CD4-positive, alpha-beta memory T cell (primary cell): ENCODE measurements at regions of chr4 and their contacts with region 1.

Region 1: DNA sequence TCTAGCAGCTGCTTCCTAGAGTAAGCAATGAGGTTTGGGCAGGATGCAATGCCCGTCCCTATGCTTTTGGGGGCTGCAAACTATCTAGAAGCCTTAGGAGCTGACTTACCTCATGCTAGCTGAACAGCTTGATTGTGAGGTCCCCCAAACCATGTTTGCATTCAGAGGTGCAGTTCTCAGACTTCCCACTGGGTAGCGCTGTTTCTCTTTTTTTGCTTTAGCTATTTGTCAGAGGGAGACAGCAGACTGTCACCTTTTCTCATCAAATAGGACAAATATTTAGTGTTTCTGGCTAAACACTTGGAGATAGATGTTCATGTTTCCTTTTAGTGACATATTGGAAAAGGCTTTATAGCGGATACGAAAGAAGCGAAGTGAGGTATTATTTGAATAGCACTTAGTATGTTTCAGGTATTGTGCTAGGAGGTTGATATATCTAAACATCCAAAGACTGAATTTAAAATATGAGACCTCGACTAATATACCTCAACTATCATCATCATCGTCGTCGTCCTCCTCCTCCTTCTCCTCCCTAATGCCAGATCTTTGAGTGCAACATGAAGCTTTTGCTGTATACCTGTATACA is 18.7 kb upstream of the TMEM192 start:
- DNase-seq: peak; percentile 62 to 77 (median 68)
- H3K4me3 ChIP-seq: no peak overlapping the region
- H3K4me3 Mint-ChIP-seq: no peak overlapping the region
- H3K27ac ChIP-seq: no peak overlapping the region
- H3K27ac Mint-ChIP-seq: peak overlapping the region in 1 of 7 donors; percentile 1
- H3K4me1 ChIP-seq: no peaks in the 10 kb centered on the region
- H3K4me1 Mint-ChIP-seq: peaks cover 0 to 2% (median 0%) of the 10 kb centered on the region in 4 donors
- H3K27me3 ChIP-seq: no peaks in the 10 kb centered on the region
- H3K27me3 Mint-ChIP-seq: peaks cover 23 to 24% of the 10 kb centered on the region in 2 donors

Region 2: GRCh38 chr4:164783976-164784375 is 347.4 kb before region 1 on chr4:
- CTCF ChIA-PET with region 1: no interaction called
- POLR2A ChIA-PET with region 1: no interaction called
- intact Hi-C with region 1: no loop called
- DNase-seq: no peak
- H3K4me3 ChIP-seq: no peak overlapping the region
- H3K4me3 Mint-ChIP-seq: no peak overlapping the region
- H3K27ac ChIP-seq: no peak overlapping the region
- H3K27ac Mint-ChIP-seq: no peak overlapping the region
- H3K4me1 ChIP-seq: no peaks in the 10 kb centered on the region
- H3K4me1 Mint-ChIP-seq: no peaks in the 10 kb centered on the region
- H3K27me3 ChIP-seq: no peaks in the 10 kb centered on the region
- H3K27me3 Mint-ChIP-seq: peaks cover 0 to 1% of the 10 kb centered on the region in 2 donors

Region 3: GRCh38 chr4:165118256-165118909 is 13.0 kb before region 1 on chr4:
- CTCF ChIA-PET with region 1: interaction called, 29 read pairs
- POLR2A ChIA-PET with region 1: no interaction called
- intact Hi-C with region 1: no loop called
- DNase-seq: no peak
- H3K4me3 ChIP-seq: no peak overlapping the region
- H3K4me3 Mint-ChIP-seq: no peak overlapping the region
- H3K27ac ChIP-seq: no peak overlapping the region
- H3K27ac Mint-ChIP-seq: no peak overlapping the region
- H3K4me1 ChIP-seq: peaks cover 4% of the 10 kb centered on the region
- H3K4me1 Mint-ChIP-seq: peaks cover 0 to 5% (median under 1%) of the 10 kb centered on the region in 4 donors
- H3K27me3 ChIP-seq: no peaks in the 10 kb centered on the region
- H3K27me3 Mint-ChIP-seq: peaks cover 6 to 8% of the 10 kb centered on the region in 2 donors

Region 4: DNA sequence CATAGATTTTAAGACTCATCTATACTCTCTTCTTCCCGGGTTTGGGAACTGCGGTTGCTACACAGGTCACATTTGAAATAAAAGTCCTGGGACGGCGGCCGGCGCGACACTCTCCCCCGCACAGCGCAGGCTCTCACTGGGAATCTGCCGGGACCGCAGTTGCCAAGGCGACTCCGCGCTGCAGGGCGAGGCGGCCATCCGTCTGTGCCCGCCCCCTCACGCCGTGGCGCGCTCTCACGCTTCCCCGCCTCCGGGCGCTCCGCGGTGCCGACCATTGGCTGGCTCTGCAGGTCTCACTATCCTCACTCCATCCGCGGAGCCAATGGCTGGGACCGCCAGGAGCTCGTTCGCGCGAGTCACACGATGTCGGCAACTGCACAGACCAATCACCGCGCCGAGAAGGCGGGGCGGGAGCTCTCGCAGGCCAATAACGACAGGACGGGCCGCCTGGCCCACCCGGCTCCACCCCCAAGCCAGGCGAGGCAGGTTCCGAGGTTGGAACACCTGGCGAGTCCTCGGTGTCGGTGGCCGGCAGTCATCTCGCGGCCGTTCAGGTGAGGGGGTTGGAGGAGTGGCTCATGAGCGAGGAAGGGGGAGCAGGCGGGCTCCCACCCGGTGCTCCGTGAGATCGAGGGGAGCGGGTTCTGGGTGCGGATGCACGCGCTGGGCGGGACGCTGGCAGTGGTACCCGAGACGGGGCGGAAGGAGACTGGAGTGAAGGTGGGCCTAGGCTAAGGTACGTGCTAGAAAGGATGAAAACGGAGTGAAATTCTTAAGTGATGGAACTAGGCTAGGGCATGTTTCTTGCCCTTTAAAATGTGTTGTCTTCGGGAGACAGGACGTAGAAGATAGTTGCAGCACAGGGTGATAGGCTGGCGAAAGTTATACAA is 196.1 kb after region 1 on chr4 and contains the start of gene MSMO1:
- CTCF ChIA-PET with region 1: interaction called, 6 read pairs
- POLR2A ChIA-PET with region 1: no interaction called
- intact Hi-C with region 1: loop called (anchors 5 kb)
- DNase-seq: peak; percentile 97 to 99 (median 98)
- H3K4me3 ChIP-seq: peak within 1 kb of the TSS; percentile 74 to 96
- H3K4me3 Mint-ChIP-seq: no peak within 1 kb of the TSS
- H3K27ac ChIP-seq: peak within 1 kb of the TSS; percentile 74
- H3K27ac Mint-ChIP-seq: no peak within 1 kb of the TSS
- H3K4me1 ChIP-seq: peaks cover 51% of the 10 kb centered on the region
- H3K4me1 Mint-ChIP-seq: peaks cover 21 to 38% (median 28%) of the 10 kb centered on the region in 4 donors
- H3K27me3 ChIP-seq: no peaks in the 10 kb centered on the region
- H3K27me3 Mint-ChIP-seq: no peaks in the 10 kb centered on the region
- total RNA-seq, gene MSMO1: 24.4 to 24.8 TPM

Region 5: GRCh38 chr4:165343353-165344191 is 212.2 kb after region 1 on chr4:
- CTCF ChIA-PET with region 1: interaction called, 66 read pairs
- POLR2A ChIA-PET with region 1: interaction called, 3 read pairs
- intact Hi-C with region 1: loop called (anchors 1 kb)
- DNase-seq: peak in 1 of 5 donors; percentile 3
- H3K4me3 ChIP-seq: no peak overlapping the region
- H3K4me3 Mint-ChIP-seq: no peak overlapping the region
- H3K27ac ChIP-seq: no peak overlapping the region
- H3K27ac Mint-ChIP-seq: no peak overlapping the region
- H3K4me1 ChIP-seq: no peaks in the 10 kb centered on the region
- H3K4me1 Mint-ChIP-seq: no peaks in the 10 kb centered on the region
- H3K27me3 ChIP-seq: no peaks in the 10 kb centered on the region
- H3K27me3 Mint-ChIP-seq: no peaks in the 10 kb centered on the region

Region 6: GRCh38 chr4:165394275-165394674 is 262.9 kb after region 1 on chr4:
- CTCF ChIA-PET with region 1: no interaction called
- POLR2A ChIA-PET with region 1: no interaction called
- intact Hi-C with region 1: no loop called
- DNase-seq: no peak
- H3K4me3 ChIP-seq: no peak overlapping the region
- H3K4me3 Mint-ChIP-seq: no peak overlapping the region
- H3K27ac ChIP-seq: no peak overlapping the region
- H3K27ac Mint-ChIP-seq: no peak overlapping the region
- H3K4me1 ChIP-seq: no peaks in the 10 kb centered on the region
- H3K4me1 Mint-ChIP-seq: no peaks in the 10 kb centered on the region
- H3K27me3 ChIP-seq: no peaks in the 10 kb centered on the region
- H3K27me3 Mint-ChIP-seq: peaks cover 4 to 10% of the 10 kb centered on the region in 2 donors

Region 7: GRCh38 chr4:165464813-165465381 is 333.6 kb after region 1 on chr4:
- CTCF ChIA-PET with region 1: interaction called, 90 read pairs
- POLR2A ChIA-PET with region 1: no interaction called
- intact Hi-C with region 1: loop called (anchors 1 kb)
- DNase-seq: peak in 4 of 5 donors; percentile 37 to 43 (median 38)
- H3K4me3 ChIP-seq: no peak overlapping the region
- H3K4me3 Mint-ChIP-seq: no peak overlapping the region
- H3K27ac ChIP-seq: no peak overlapping the region
- H3K27ac Mint-ChIP-seq: no peak overlapping the region
- H3K4me1 ChIP-seq: no peaks in the 10 kb centered on the region
- H3K4me1 Mint-ChIP-seq: no peaks in the 10 kb centered on the region
- H3K27me3 ChIP-seq: no peaks in the 10 kb centered on the region
- H3K27me3 Mint-ChIP-seq: peaks cover 0 to 2% of the 10 kb centered on the region in 2 donors

Region 8: DNA sequence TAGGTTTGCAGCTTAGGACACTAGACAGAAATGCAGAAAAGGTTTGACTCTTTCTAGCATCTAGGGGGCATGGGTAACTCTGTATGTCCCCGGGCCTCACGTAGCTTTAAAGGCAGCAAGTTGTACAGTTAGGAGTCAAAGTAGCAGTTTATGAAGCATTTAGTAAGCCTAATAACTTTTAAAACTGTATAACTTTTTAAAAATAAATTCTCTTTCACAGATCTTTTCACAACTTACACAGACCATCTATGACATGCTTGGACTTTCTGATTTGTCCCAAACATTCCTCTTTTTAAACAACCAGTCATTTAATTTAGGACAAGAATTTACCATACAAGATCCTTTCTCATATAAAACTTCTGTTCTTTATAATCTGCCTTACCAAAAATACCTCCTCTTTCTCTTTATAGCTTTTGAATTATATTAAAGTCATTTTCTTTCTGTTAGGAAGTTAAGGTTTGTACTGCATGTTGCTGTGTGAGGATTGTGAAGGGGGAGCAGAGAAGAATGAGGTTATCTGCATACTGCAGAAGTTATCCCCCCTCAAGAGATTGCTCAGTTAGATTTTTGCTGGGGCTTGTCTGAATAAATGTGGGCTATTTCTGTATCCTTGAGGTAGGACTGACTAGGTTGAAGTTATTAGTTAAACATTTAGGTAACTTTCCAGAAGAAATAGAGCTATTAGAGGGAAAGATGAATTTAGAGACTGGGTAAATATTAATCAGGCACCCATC is 341.8 kb after region 1 on chr4:
- CTCF ChIA-PET with region 1: interaction called, 90 read pairs
- POLR2A ChIA-PET with region 1: no interaction called
- intact Hi-C with region 1: no loop called
- DNase-seq: no peak
- H3K4me3 ChIP-seq: no peak overlapping the region
- H3K4me3 Mint-ChIP-seq: no peak overlapping the region
- H3K27ac ChIP-seq: no peak overlapping the region
- H3K27ac Mint-ChIP-seq: no peak overlapping the region
- H3K4me1 ChIP-seq: no peaks in the 10 kb centered on the region
- H3K4me1 Mint-ChIP-seq: no peaks in the 10 kb centered on the region
- H3K27me3 ChIP-seq: no peaks in the 10 kb centered on the region
- H3K27me3 Mint-ChIP-seq: peaks cover 2 to 7% of the 10 kb centered on the region in 2 donors

Region 9: DNA sequence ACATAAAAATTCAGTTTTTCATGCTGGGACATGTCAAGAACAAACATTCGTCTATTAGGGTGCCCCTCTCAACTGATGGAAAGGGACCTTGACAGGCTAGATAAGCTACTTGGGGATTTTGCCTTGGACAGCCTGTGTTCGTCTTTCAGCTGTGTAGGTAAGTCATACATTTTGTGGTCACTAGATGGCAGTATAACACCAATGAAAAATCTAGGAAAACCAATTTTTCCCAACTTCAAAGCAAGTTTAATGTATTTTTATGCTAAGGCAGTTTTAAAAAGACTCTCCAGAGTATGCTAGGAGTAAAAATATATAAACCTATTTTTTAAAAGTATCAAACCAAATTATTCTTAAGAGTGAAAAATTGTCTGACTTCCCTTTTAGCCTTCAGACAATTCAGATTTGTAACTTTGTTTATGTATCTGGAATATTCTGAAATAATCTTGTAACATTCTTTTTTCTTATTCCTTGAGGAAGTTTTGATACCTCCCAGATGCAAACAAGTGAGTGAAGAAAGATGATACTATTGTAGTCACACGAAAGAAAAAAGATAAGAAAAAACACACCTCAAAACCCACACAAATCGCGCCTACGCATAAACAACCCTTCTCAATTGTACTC is 405.8 kb after region 1 on chr4:
- CTCF ChIA-PET with region 1: no interaction called
- POLR2A ChIA-PET with region 1: no interaction called
- intact Hi-C with region 1: loop called (anchors 5 kb)
- DNase-seq: peak in 3 of 5 donors; percentile 8 to 22 (median 15)
- H3K4me3 ChIP-seq: no peak overlapping the region
- H3K4me3 Mint-ChIP-seq: no peak overlapping the region
- H3K27ac ChIP-seq: no peak overlapping the region
- H3K27ac Mint-ChIP-seq: no peak overlapping the region
- H3K4me1 ChIP-seq: no peaks in the 10 kb centered on the region
- H3K4me1 Mint-ChIP-seq: no peaks in the 10 kb centered on the region
- H3K27me3 ChIP-seq: no peaks in the 10 kb centered on the region
- H3K27me3 Mint-ChIP-seq: peaks cover 4 to 6% of the 10 kb centered on the region in 2 donors